Pancreas (tissue), 10 donors: ENCODE measurements at regions of chr9 and their contacts with region 1.

Region 1: DNA sequence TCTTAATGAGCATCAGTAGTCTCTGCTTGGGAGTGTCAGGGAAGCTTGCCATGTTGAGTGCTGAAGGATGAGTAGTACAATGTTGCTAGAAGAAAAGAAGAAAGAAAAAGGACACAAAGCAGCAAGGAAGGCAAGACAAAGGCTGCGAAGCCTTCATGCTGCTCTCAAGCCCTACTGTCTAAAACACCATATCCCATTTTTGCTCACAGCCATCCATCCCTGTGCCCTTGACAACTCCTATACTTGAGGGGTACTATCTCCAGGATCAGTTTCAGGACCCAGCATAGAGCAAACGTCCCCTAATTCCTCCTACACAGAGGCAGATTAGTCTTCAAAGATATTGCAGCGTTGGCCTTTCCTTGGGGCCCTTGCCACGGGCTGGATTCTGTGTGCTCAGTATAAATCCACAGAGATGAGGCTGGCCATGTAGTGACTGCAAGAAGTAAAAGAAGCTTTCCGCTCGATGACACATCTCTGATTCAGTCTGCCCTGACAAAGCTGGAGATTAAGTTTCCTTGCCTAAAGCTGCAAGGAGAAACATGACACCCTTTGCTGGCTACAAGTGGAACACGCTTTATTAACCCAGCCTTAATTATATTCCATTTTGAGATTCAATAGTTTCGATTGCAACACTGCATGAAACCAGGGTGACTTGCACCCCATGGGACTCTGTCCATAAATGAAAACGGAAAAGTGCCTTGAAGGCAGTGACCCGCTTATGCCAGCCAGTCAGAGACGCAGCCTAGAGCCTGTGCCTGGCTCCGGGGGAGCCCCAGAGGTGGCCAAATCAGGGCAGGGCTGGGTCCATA is 304.6 kb downstream of the ACTL7B start:
- DNase-seq: no peak
- ATAC-seq: no peak
- H3K4me3 ChIP-seq: no peak overlapping the region
- H3K27ac ChIP-seq: no peak overlapping the region
- H3K4me1 ChIP-seq: peaks cover 0 to 21% (median 5%) of the 10 kb centered on the region in 3 donors
- H3K27me3 ChIP-seq: no peaks in the 10 kb centered on the region
- CTCF ChIP-seq: no peak

Region 2: DNA sequence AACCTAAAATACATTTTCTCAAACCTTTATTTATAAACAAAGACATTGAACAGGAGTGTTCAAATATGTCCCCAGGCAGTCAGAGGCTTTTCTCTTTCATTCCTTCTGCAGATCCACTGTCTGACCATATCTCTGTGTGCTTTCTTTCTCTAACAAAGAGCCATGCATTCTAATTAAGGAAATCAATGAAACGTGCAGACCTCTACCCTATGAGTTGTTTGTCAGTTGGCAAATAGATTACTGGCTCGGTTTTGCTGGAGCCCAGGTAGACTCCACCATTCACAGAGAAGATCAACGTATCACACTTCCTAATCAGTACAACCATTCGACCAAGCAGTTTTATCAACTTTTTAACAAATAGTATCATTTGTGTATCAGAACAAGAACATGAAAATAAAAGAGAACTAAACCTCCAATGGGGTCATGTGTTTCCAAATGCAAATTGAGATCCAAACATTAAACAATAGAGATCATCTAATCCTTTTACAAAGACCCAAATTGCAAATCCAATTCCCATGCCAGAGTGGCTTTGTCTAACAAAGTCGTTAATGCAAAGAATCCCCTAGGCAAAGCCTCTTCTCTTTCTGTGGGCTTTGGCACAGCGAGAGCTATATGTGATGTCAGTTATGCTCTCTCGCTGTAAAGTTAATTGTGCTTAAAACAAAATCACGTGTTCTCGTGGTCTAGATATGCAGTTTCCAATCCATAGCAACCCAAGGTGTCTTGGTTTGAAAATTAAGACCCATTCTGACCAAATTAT is 1078.5 kb before region 1 on chr9:
- intact Hi-C with region 1: loop called in 1 of 3 experiments (anchors 10 kb)
- DNase-seq: no peak
- ATAC-seq: no peak
- H3K4me3 ChIP-seq: no peak overlapping the region
- H3K27ac ChIP-seq: no peak overlapping the region
- H3K4me1 ChIP-seq: no peaks in the 10 kb centered on the region
- H3K27me3 ChIP-seq: no peaks in the 10 kb centered on the region
- CTCF ChIP-seq: no peak

Region 3: DNA sequence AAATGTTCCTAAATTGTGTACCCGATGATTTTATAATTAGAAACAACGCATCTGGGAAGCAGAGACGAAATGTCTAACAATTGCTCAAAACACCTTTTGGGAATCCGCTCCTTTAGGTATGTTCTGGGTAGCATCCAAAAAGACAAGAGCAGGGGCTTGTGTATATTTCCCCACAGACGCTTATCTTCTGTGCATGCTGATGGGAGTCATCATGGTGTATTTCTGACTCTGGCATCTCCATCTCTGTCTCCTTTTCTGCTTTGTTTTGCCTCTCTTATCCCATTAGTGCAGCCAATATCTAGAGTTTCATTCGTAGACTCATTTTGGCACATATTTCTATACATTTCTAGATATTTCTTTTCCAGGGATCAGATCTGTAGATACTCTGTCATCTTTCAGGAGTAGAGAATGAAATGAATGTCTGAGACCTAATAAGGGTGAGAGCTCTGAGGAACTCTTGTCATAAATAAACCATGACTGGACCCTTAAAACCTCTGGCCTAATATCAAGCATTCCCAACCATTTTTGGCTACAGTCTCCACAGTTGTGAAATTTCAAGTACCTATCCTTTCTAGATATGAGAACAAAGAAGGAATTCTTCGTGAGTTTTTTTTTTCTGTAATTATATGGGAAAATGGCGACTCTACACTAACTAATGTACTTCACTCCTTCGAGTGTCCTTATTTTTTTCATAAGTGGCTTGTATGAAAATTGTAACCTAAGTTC is 203.6 kb before region 1 on chr9:
- intact Hi-C with region 1: no loop called
- DNase-seq: no peak
- ATAC-seq: no peak
- H3K4me3 ChIP-seq: no peak overlapping the region
- H3K27ac ChIP-seq: no peak overlapping the region
- H3K4me1 ChIP-seq: no peaks in the 10 kb centered on the region
- H3K27me3 ChIP-seq: no peaks in the 10 kb centered on the region
- CTCF ChIP-seq: no peak

Region 4: GRCh38 chr9:108704156-108704852 is 153.1 kb after region 1 on chr9:
- intact Hi-C with region 1: no loop called
- DNase-seq: no peak
- ATAC-seq: no peak
- H3K4me3 ChIP-seq: no peak overlapping the region
- H3K27ac ChIP-seq: no peak overlapping the region
- H3K4me1 ChIP-seq: no peaks in the 10 kb centered on the region
- H3K27me3 ChIP-seq: no peaks in the 10 kb centered on the region
- CTCF ChIP-seq: no peak